Dorsolateral prefrontal cortex (tissue), 120 donors: ENCODE measurements at regions of chr7 and their contacts with region 1.

Region 1: GRCh38 chr7:29084832-29085231 is 61.5 kb downstream of the CPVL start:
- DNase-seq: no peak
- H3K4me3 ChIP-seq: no peak overlapping the region
- H3K27ac ChIP-seq: no peak overlapping the region
- H3K27me3 ChIP-seq: no peaks in the 10 kb centered on the region
- CTCF ChIP-seq: no peak

Region 2: DNA sequence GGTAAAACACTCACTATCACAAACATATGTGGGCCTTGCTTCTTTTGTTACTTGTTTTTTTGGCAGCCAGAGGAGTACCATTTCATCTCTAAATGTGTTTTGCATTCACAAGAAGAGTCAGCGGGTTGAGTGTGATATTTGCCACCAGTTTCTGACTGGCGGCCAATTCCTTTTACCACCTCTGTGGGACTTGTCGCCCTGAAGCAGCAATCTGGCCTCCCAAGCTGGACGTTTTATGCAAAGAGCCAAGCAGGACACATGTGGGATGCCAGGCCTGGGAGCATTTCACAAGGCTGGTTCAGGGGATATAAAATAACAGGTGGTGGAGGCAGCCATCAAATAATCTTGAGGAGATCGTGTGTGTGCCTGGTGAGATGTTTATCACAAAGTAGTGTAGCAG is 64.9 kb before region 1 on chr7:
- intact Hi-C with region 1: loop called in 1 of 2 experiments (anchors 10 kb)
- DNase-seq: peak; percentile 21 to 78 (median 62)
- H3K4me3 ChIP-seq: no peak overlapping the region
- H3K27ac ChIP-seq: peak overlapping the region in 11 of 59 donors; percentile 5 to 50 (median 30)
- H3K27me3 ChIP-seq: no peaks in the 10 kb centered on the region
- CTCF ChIP-seq: no peak

Region 3: GRCh38 chr7:29135846-29136245 is 51.0 kb after region 1 on chr7:
- intact Hi-C with region 1: no loop called
- DNase-seq: no peak
- H3K4me3 ChIP-seq: no peak overlapping the region
- H3K27ac ChIP-seq: no peak overlapping the region
- H3K27me3 ChIP-seq: peaks cover 0 to 6% (median 0%) of the 10 kb centered on the region in 45 donors
- CTCF ChIP-seq: no peak

Region 4: GRCh38 chr7:29207162-29207801 is 122.5 kb after region 1 on chr7:
- intact Hi-C with region 1: no loop called
- DNase-seq: no peak
- H3K4me3 ChIP-seq: no peak overlapping the region
- H3K27ac ChIP-seq: peak overlapping the region in 3 of 59 donors; percentile 2 to 66 (median 21)
- H3K27me3 ChIP-seq: no peaks in the 10 kb centered on the region
- CTCF ChIP-seq: no peak